Heart right ventricle (tissue), 16 donors: ENCODE measurements at regions of chr1 and their contacts with region 1.

Region 1: DNA sequence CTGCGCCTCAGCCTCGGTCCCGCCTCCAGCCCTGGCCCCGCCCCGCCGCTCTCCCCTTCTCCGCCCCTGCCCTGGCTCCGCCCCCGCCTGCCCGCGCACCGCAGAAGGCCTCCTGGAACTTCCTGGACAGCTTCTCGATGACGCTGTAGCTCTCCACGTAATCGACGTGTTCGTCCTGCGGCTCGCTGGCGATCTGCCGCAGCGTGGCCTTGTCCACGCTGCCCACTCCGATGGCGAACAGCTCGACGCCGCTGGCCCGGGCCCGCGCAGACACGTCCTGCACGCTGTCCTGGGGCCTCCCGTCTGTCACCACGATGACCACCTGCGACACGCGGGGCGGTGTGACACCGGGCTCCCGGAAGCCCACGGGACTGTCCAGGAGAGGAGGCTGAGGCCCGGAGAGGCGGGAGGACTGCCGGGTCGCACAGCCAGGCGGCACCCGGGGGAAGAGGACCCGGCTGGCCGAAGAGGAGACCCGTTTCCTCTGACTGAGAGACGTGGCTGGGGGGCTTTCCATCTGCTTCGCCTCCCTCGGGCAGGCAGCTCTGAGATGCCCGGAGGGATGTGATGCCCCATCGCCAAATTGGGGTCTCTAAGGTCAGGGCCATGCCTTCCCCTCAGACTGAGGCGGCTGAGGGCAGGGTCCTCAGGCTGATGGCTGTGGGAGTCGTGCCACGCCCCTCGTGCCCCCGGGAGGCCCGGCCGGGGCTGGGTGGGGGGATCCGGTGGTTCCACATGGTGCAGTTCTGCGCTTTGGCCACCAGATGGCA is 4.6 kb downstream of the MATN1 start:
- DNase-seq: peak; percentile 79 to 85
- ATAC-seq: peak; percentile 86 to 92 (median 89)
- H3K4me3 ChIP-seq: peak overlapping the region; percentile 48 to 65 (median 60)
- H3K27ac ChIP-seq: peak overlapping the region; percentile 74 to 99 (median 96)
- H3K4me1 ChIP-seq: peaks cover 0 to 15% (median 10%) of the 10 kb centered on the region in 9 donors
- H3K27me3 ChIP-seq: no peaks in the 10 kb centered on the region
- CTCF ChIP-seq: peak; percentile 93 to 100 (median 98)

Region 2: DNA sequence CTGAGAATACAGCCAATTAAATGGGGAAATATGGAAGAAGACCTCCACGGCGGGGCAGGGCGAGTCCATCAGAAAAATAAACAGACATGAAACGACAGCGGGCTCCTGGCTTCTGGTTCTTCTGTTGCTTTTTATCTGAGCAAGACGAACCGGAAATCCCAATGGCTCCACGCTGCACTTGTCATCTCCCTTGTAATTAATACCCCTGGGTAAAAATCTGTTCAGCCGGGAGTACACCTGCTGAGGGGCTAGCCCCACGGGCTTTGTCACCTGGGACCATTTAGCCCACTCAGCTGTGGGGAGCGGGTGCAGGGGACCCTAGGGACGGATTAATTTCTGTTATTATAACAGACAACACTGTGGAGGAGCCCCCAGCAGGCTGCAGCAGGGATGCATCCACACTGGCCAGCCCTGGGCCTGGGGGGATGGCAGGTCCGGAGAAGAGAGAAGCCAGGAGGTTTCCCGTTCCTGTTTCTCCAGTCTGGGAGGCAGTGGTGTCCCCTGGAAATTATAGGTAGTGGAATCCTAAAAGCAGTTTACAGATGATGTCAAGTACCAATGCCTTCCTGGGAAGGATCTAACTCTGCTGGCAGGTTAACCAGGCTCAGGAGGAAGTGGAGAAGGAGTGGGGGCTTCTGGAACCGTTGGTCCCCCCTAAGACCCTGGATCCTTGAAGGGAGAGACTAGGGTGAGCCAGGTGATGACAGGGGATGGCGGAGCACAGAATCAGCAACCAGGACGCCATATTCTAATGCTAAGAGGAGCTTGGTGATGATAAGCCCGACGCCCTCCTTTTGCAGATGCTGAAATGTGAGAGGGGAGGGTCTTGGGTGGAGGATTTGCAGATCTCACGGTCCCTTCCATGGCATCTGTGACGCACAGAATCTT is 916.4 kb before region 1 on chr1:
- intact Hi-C with region 1: loop called in 1 of 10 experiments (anchors 10 kb)
- DNase-seq: no peak
- ATAC-seq: no peak
- H3K4me3 ChIP-seq: no peak overlapping the region
- H3K27ac ChIP-seq: no peak overlapping the region
- H3K4me1 ChIP-seq: peaks cover 0 to 14% (median 0%) of the 10 kb centered on the region in 9 donors
- H3K27me3 ChIP-seq: peaks cover 0 to 37% (median 29%) of the 10 kb centered on the region in 7 donors
- CTCF ChIP-seq: no peak

Region 3: GRCh38 chr1:30779294-30780071 is 60.7 kb after region 1 on chr1:
- intact Hi-C with region 1: loop called (anchors 1 to 2 kb)
- DNase-seq: peak; percentile 78 to 86
- ATAC-seq: peak; percentile 53 to 81 (median 74)
- H3K4me3 ChIP-seq: no peak overlapping the region
- H3K27ac ChIP-seq: peak overlapping the region in 1 of 10 donors; percentile 80
- H3K4me1 ChIP-seq: peaks cover 0 to 49% (median 4%) of the 10 kb centered on the region in 9 donors
- H3K27me3 ChIP-seq: peaks cover 0 to 14% (median 0%) of the 10 kb centered on the region in 7 donors
- CTCF ChIP-seq: peak; percentile 91 to 98 (median 96)

Region 4: DNA sequence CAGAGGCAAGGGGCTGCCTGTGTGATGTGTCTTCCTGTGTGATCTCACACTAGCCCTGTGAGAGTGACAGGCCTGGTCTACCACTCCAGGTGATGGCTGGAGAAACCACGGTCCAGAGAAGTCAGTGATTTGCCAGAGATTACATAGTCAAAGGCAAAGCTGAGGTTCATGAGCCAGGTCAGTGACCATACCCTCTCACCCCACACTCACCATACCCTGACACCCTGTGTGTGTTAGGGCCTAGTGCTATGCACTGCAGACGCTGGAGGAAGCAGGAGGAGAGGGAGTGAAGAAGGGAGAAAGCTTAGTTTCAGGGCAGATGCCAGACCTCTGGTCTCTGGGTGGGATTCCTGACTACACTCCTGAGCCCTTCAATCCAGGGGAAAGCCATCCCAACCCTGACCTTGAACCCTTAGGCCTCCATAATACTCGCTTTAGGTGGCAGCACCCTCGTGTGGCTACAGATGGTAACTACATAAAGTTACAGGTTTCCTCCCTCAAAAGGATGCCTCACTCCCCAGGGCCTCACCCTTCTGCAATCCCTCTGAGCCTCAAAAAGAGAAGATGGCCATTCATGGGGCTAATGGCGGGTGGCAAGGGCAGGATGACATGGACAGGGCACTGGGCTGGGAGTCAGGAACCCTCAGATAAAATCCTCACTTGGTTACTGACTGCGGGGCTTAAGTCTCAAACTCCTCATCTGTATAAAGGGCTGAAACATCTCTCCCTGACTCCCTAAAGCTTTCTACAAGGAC is 210.5 kb after region 1 on chr1:
- intact Hi-C with region 1: loop called in 2 of 10 experiments (anchors 5 kb)
- DNase-seq: no peak
- ATAC-seq: peak; percentile 31 to 83 (median 66)
- H3K4me3 ChIP-seq: no peak overlapping the region
- H3K27ac ChIP-seq: peak overlapping the region in 1 of 10 donors; percentile 44
- H3K4me1 ChIP-seq: peaks cover 0 to 10% (median 0%) of the 10 kb centered on the region in 9 donors
- H3K27me3 ChIP-seq: peaks cover 0 to 7% (median 0%) of the 10 kb centered on the region in 7 donors
- CTCF ChIP-seq: peak; percentile 36 to 76 (median 71)

Region 5: GRCh38 chr1:31155216-31155841 is 436.5 kb after region 1 on chr1:
- intact Hi-C with region 1: loop called in 1 of 10 experiments (anchors 10 kb)
- DNase-seq: peak; percentile 38 to 69
- ATAC-seq: peak; percentile 88 to 95 (median 92)
- H3K4me3 ChIP-seq: peak overlapping the region; percentile 38 to 83 (median 72)
- H3K27ac ChIP-seq: peak overlapping the region; percentile 22 to 85 (median 75)
- H3K4me1 ChIP-seq: peaks cover 0 to 15% (median 5%) of the 10 kb centered on the region in 9 donors
- H3K27me3 ChIP-seq: no peaks in the 10 kb centered on the region
- CTCF ChIP-seq: peak in 6 of 9 donors; percentile 24 to 55 (median 46)